Prostate gland (tissue), 2 donors: ENCODE measurements at regions of chr18 and their contacts with region 1.

Region 1: GRCh38 chr18:62982600-62983251 is 267.4 kb downstream of the PHLPP1 start:
- DNase-seq: peak; percentile 62
- H3K4me3 ChIP-seq: no peak overlapping the region
- H3K27ac ChIP-seq: no peak overlapping the region
- H3K4me1 ChIP-seq: no peaks in the 10 kb centered on the region
- H3K27me3 ChIP-seq: no peaks in the 10 kb centered on the region
- CTCF ChIP-seq: peak; percentile 46 to 86 (median 84)
- POLR2A ChIP-seq: no peak

Region 2: GRCh38 chr18:62790871-62791772 is 191.6 kb before region 1 on chr18:
- intact Hi-C with region 1: loop called (anchors 10 kb)
- DNase-seq: no peak
- H3K4me3 ChIP-seq: no peak overlapping the region
- H3K27ac ChIP-seq: no peak overlapping the region
- H3K4me1 ChIP-seq: no peaks in the 10 kb centered on the region
- H3K27me3 ChIP-seq: no peaks in the 10 kb centered on the region
- CTCF ChIP-seq: no peak
- POLR2A ChIP-seq: no peak

Region 3: DNA sequence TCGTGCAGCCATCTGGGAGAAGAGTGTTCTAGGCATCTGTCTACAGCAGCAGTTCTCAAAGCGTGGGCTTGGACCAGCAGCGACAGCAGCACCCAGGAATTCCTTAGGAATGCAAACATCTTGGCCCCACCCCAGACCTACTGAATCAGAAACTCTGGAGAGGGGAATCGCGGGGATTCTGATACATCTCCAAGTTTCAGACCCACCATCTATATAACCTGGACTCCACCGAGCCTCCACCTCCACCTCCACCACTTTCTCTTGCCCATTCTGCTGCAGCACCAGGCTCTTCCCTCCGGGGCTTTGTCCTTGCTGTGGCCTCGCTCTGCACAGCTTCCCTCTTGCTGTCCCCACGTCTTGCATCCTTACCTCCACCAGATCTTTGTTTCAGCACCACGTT is 80.4 kb after region 1 on chr18:
- intact Hi-C with region 1: no loop called
- DNase-seq: no peak
- H3K4me3 ChIP-seq: no peak overlapping the region
- H3K27ac ChIP-seq: no peak overlapping the region
- H3K4me1 ChIP-seq: no peaks in the 10 kb centered on the region
- H3K27me3 ChIP-seq: no peaks in the 10 kb centered on the region
- CTCF ChIP-seq: no peak
- POLR2A ChIP-seq: no peak